ENCODE measurements at regions of chr4 and their contacts with region 1.

Region 1: DNA sequence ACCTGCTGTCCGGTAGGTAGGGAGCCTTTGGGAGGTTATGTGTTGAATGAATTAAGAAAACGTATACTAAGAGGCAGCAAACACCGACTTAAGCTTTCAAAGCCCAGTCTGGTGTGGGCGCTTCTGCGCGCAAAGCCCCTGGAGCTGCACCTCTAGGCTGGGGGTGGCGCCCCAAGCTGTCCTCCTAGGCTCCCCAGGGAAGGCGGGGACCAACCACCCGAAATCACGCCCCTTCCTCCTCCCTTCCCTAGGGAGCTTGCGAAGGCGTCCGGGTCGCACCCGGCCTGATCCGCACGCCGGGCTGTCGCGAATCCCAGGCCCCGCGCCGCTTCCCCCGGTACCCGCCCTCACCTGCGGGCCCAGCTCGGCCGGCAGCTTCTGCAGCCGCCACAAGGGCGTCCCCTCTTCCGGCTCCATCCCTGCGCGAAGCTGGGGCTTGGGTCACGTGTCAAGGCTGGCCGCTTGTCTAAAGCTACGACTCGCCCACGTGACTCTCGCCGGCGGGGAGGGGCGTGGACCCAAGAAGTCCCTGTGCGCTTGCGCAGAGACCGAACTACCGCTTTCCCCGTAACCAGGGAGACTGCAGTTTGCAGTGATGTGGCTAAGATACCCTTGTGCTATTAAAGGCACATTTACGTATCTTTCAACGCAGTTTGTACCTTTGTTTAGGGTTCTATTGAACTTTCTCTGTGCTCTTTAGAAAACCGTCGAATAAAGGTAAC is at the start of gene COMMD8:
- DNase-seq: peak; percentile 93 to 99 (median 96)
- ATAC-seq: peak; percentile 89
- H3K4me3 ChIP-seq: peak within 1 kb of the TSS; percentile 86
- H3K4me3 Mint-ChIP-seq: peak within 1 kb of the TSS; percentile 93
- H3K27ac ChIP-seq: peak within 1 kb of the TSS; percentile 43 to 63
- H3K27ac Mint-ChIP-seq: peak within 1 kb of the TSS; percentile 83
- H3K4me1 ChIP-seq: peaks cover 16% of the 10 kb centered on the region
- H3K4me1 Mint-ChIP-seq: peaks cover 51% of the 10 kb centered on the region
- H3K27me3 ChIP-seq: no peaks in the 10 kb centered on the region
- H3K27me3 Mint-ChIP-seq: no peaks in the 10 kb centered on the region
- CTCF ChIP-seq: no peak
- total RNA-seq, gene COMMD8: 4.4 to 5.4 TPM

Region 2: GRCh38 chr4:47442980-47443379 is 20.4 kb before region 1 on chr4:
- CTCF ChIA-PET with region 1: no interaction called
- POLR2A ChIA-PET with region 1: no interaction called
- intact Hi-C with region 1: no loop called
- DNase-seq: peak in 2 of 14 experiments; percentile 19 to 22
- ATAC-seq: no peak
- H3K4me3 ChIP-seq: no peak overlapping the region
- H3K4me3 Mint-ChIP-seq: no peak overlapping the region
- H3K27ac ChIP-seq: no peak overlapping the region
- H3K27ac Mint-ChIP-seq: no peak overlapping the region
- H3K4me1 ChIP-seq: no peaks in the 10 kb centered on the region
- H3K4me1 Mint-ChIP-seq: peaks cover 10% of the 10 kb centered on the region
- H3K27me3 ChIP-seq: no peaks in the 10 kb centered on the region
- H3K27me3 Mint-ChIP-seq: no peaks in the 10 kb centered on the region
- CTCF ChIP-seq: no peak

Region 3: GRCh38 chr4:47485047-47485692 is 21.8 kb after region 1 on chr4 and contains the start of gene ATP10D:
- CTCF ChIA-PET with region 1: interaction called, 7 read pairs
- POLR2A ChIA-PET with region 1: interaction called, 36 read pairs
- intact Hi-C with region 1: loop called (anchors 1 to 2 kb)
- DNase-seq: peak; percentile 40 to 87 (median 65)
- ATAC-seq: peak; percentile 93
- H3K4me3 ChIP-seq: peak within 1 kb of the TSS; percentile 80
- H3K4me3 Mint-ChIP-seq: peak within 1 kb of the TSS; percentile 97
- H3K27ac ChIP-seq: peak within 1 kb of the TSS; percentile 16 to 58
- H3K27ac Mint-ChIP-seq: peak within 1 kb of the TSS; percentile 81
- H3K4me1 ChIP-seq: peaks cover 13% of the 10 kb centered on the region
- H3K4me1 Mint-ChIP-seq: peaks cover 30% of the 10 kb centered on the region
- H3K27me3 ChIP-seq: no peaks in the 10 kb centered on the region
- H3K27me3 Mint-ChIP-seq: no peaks in the 10 kb centered on the region
- CTCF ChIP-seq: peak; percentile 10
- total RNA-seq, gene ATP10D: 1.1 to 1.7 TPM

Region 4: GRCh38 chr4:47499700-47500099 is 36.3 kb after region 1 on chr4:
- CTCF ChIA-PET with region 1: no interaction called
- POLR2A ChIA-PET with region 1: no interaction called
- intact Hi-C with region 1: no loop called
- DNase-seq: no peak
- ATAC-seq: no peak
- H3K4me3 ChIP-seq: no peak overlapping the region
- H3K4me3 Mint-ChIP-seq: no peak overlapping the region
- H3K27ac ChIP-seq: no peak overlapping the region
- H3K27ac Mint-ChIP-seq: no peak overlapping the region
- H3K4me1 ChIP-seq: no peaks in the 10 kb centered on the region
- H3K4me1 Mint-ChIP-seq: no peaks in the 10 kb centered on the region
- H3K27me3 ChIP-seq: no peaks in the 10 kb centered on the region
- H3K27me3 Mint-ChIP-seq: no peaks in the 10 kb centered on the region
- CTCF ChIP-seq: no peak

Region 5: GRCh38 chr4:47510506-47511143 is 47.2 kb after region 1 on chr4:
- CTCF ChIA-PET with region 1: no interaction called
- POLR2A ChIA-PET with region 1: no interaction called
- intact Hi-C with region 1: no loop called
- DNase-seq: peak in 3 of 14 experiments; percentile 23 to 35 (median 23)
- ATAC-seq: no peak
- H3K4me3 ChIP-seq: no peak overlapping the region
- H3K4me3 Mint-ChIP-seq: no peak overlapping the region
- H3K27ac ChIP-seq: no peak overlapping the region
- H3K27ac Mint-ChIP-seq: no peak overlapping the region
- H3K4me1 ChIP-seq: no peaks in the 10 kb centered on the region
- H3K4me1 Mint-ChIP-seq: peaks cover 12% of the 10 kb centered on the region
- H3K27me3 ChIP-seq: no peaks in the 10 kb centered on the region
- H3K27me3 Mint-ChIP-seq: no peaks in the 10 kb centered on the region
- CTCF ChIP-seq: no peak

Region 6: GRCh38 chr4:47567511-47567910 is 104.1 kb after region 1 on chr4:
- CTCF ChIA-PET with region 1: no interaction called
- POLR2A ChIA-PET with region 1: interaction called, 3 read pairs
- intact Hi-C with region 1: loop called in 1 of 2 experiments (anchors 2 kb)
- DNase-seq: no peak
- ATAC-seq: no peak
- H3K4me3 ChIP-seq: no peak overlapping the region
- H3K4me3 Mint-ChIP-seq: no peak overlapping the region
- H3K27ac ChIP-seq: no peak overlapping the region
- H3K27ac Mint-ChIP-seq: no peak overlapping the region
- H3K4me1 ChIP-seq: no peaks in the 10 kb centered on the region
- H3K4me1 Mint-ChIP-seq: peaks cover 4% of the 10 kb centered on the region
- H3K27me3 ChIP-seq: no peaks in the 10 kb centered on the region
- H3K27me3 Mint-ChIP-seq: no peaks in the 10 kb centered on the region
- CTCF ChIP-seq: no peak

Region 7: GRCh38 chr4:47631161-47631560 is 167.8 kb after region 1 on chr4:
- CTCF ChIA-PET with region 1: no interaction called
- POLR2A ChIA-PET with region 1: no interaction called
- intact Hi-C with region 1: no loop called
- DNase-seq: no peak
- ATAC-seq: no peak
- H3K4me3 ChIP-seq: no peak overlapping the region
- H3K4me3 Mint-ChIP-seq: no peak overlapping the region
- H3K27ac ChIP-seq: no peak overlapping the region
- H3K27ac Mint-ChIP-seq: no peak overlapping the region
- H3K4me1 ChIP-seq: no peaks in the 10 kb centered on the region
- H3K4me1 Mint-ChIP-seq: no peaks in the 10 kb centered on the region
- H3K27me3 ChIP-seq: peaks cover 0 to 2% of the 10 kb centered on the region in 2 experiments
- H3K27me3 Mint-ChIP-seq: peaks cover 6% of the 10 kb centered on the region
- CTCF ChIP-seq: no peak

Region 8: GRCh38 chr4:48016141-48017103 is 553.0 kb after region 1 on chr4 and contains the starts of genes CNGA1 and NIPAL1:
- CTCF ChIA-PET with region 1: no interaction called
- POLR2A ChIA-PET with region 1: no interaction called
- intact Hi-C with region 1: loop called in 1 of 2 experiments (anchors 10 kb)
- DNase-seq: peak; percentile 36 to 83 (median 62)
- ATAC-seq: peak; percentile 96
- H3K4me3 ChIP-seq: peak within 1 kb of the TSS; percentile 65
- H3K4me3 Mint-ChIP-seq: peak within 1 kb of the TSS; percentile 84
- H3K27ac ChIP-seq: no peak within 1 kb of the TSS
- H3K27ac Mint-ChIP-seq: no peak within 1 kb of the TSS
- H3K4me1 ChIP-seq: peaks cover 22% of the 10 kb centered on the region
- H3K4me1 Mint-ChIP-seq: peaks cover 12% of the 10 kb centered on the region
- H3K27me3 ChIP-seq: peaks cover 0 to 9% of the 10 kb centered on the region in 2 experiments
- H3K27me3 Mint-ChIP-seq: peaks cover 22% of the 10 kb centered on the region
- CTCF ChIP-seq: peak; percentile 40
- total RNA-seq, gene CNGA1: not detected
- total RNA-seq, gene NIPAL1: 0.45 to 0.85 TPM

Region 9: DNA sequence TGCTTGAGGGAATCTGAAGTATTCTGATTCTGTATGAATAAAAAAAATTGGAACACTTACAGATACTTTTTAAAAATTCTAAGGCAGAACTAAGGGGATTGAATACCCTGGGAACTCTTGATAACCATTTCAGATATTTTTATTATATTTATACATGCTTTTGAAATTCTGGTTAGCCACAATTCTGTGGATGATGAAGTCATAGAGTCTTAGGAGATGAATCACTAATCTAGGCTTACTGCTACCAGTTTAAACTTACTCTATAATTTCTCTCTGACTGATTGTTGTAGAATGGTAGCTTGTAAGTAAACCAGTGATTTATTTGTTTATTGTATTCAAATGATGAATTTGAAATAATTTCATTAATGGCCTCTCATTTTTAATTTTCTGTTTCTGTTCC is 866.6 kb after region 1 on chr4:
- CTCF ChIA-PET with region 1: no interaction called
- POLR2A ChIA-PET with region 1: no interaction called
- intact Hi-C with region 1: loop called in 1 of 2 experiments (anchors 10 kb)
- DNase-seq: no peak
- ATAC-seq: no peak
- H3K4me3 ChIP-seq: no peak overlapping the region
- H3K4me3 Mint-ChIP-seq: no peak overlapping the region
- H3K27ac ChIP-seq: no peak overlapping the region
- H3K27ac Mint-ChIP-seq: no peak overlapping the region
- H3K4me1 ChIP-seq: no peaks in the 10 kb centered on the region
- H3K4me1 Mint-ChIP-seq: no peaks in the 10 kb centered on the region
- H3K27me3 ChIP-seq: peaks cover 0 to 6% of the 10 kb centered on the region in 2 experiments
- H3K27me3 Mint-ChIP-seq: no peaks in the 10 kb centered on the region
- CTCF ChIP-seq: no peak